ENCODE measurements at regions of chr2 and their contacts with region 1.

Region 1: DNA sequence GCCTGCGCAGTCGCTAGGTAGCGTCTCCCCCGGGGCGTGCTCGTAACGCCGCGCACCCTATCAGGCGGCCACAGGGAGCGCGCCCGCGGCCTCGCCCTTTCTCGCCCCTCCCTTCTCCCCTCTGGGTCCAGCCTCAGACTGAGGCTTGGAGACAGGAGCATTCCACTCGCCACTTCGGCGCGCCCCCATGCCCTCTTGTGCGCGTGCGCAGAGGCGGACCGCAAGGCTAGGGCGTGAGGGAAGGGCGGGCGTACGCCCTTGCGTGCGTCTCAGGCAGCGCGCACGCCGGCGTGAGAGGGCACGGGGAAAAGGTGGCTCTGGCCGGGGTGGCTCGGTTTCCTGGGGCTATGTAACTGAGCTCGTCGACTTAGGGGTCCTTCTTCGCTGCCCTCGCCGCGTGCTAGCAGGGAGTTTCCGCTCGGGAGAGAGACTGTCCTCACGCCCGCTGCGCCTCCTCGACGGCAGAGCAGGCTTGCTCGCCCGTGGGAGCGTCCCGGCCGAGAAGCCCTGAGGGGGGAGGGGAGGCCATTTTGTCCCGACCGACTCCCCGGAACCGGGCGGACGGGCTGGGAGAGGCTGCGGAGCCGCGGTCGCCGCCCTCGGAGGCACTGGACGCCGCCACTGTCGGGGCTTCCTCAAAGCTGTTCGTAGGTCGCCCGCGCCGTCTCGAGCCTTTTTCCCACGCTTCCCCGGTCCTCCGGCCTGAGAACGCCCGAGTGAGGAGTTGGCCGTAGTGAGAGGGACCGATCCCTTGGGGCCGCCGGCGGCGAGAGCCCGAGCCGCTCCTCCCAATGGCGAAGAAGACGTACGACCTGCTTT is at the start of gene RAB10:
- DNase-seq: peak; percentile 96

Region 2: GRCh38 chr2:25991965-25992364 is 42.1 kb before region 1 on chr2:
- CTCF ChIA-PET with region 1: no interaction called
- POLR2A ChIA-PET with region 1: interaction called, 10 read pairs
- DNase-seq: no peak

Region 3: GRCh38 chr2:26011990-26012856 is 21.8 kb before region 1 on chr2:
- CTCF ChIA-PET with region 1: no interaction called
- POLR2A ChIA-PET with region 1: interaction called, 15 read pairs
- DNase-seq: peak; percentile 31

Region 4: DNA sequence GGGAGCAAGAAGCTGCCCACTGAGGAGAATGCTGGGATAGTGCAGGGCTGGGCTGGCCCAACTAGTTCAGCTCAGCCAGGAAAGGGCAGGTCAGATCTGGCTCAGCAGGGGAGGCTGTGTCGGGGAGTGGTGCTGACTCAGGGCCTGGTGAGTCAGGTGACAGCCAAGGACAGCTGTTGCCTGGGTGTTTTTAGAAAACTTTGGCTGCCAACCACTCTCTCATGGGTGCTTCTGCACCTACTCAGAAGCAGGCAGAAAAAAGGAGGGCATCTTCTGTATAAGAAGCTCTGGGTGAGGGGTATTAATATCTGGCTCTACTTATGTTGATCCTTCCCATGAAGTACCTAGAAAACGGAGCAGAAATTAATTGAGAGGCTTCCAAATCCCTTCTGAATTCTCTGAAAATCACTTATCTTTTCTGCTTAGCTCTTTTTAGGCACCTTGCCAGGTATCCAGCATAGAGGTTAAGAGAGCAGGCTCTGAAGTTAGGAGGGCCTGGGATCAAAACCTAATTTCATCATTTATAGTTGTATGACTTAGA is 15.8 kb before region 1 on chr2:
- CTCF ChIA-PET with region 1: no interaction called
- POLR2A ChIA-PET with region 1: interaction called, 13 read pairs
- DNase-seq: peak; percentile 42

Region 5: DNA sequence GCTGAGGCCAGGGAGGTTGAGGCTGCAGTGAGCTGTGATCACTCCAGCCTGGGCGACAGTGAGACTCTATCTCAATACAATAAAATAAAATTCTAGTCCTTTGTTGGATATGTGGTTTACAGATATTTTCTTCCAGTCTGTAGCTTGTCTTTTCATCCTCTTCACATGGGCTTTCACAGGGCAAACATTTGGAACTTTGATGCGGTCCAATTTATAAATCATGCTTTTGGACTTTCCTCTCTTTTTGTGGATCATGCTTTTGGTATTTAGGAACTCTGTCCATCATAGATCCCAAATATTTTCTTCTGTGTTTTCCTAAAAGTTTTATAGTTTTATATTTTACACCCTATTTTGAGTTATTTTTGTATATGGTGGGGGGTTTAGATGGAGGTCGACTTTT is 14.8 kb after region 1 on chr2:
- CTCF ChIA-PET with region 1: no interaction called
- POLR2A ChIA-PET with region 1: no interaction called
- DNase-seq: no peak

Region 6: GRCh38 chr2:26235085-26235484 is 201.1 kb after region 1 on chr2:
- CTCF ChIA-PET with region 1: no interaction called
- POLR2A ChIA-PET with region 1: no interaction called
- DNase-seq: no peak